Cardiac septum (tissue), 1 donor: ENCODE measurements at regions of chr1 and their contacts with region 1.

Region 1: DNA sequence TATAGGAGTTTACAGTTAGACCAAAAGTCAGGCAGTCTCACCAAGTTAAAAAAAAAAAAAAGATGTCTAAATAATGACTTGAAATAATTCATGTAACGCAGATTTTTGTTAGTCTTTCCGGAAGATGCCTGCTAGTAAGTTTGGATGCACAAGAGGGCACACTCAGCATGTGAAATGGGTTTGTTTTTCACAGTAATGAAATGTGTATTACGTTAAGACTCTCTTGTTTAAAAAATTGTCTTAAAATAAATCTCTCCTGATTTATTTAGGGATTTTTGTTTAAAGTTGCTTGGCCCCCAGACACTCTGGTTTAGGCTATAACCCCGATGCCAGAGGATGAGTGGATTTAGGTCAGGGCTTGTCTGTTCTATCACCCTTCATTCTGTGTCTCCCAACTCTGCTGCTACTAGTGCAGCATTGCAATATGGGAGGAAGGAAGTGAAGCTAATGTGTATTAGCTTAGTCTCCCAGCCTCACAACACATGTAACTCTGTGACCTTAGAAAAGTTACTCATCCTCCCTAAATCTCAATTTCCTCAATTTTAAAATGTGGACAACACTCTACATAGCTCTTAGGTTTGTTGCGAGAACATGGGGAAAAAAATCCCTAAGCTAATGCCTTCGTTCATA is 25.7 kb downstream of the CTH start:
- DNase-seq: no peak

Region 2: GRCh38 chr1:70410604-70411359 is 26.0 kb before region 1 on chr1 and contains the start of gene CTH:
- intact Hi-C with region 1: no loop called
- DNase-seq: peak; percentile 98
- total RNA-seq, gene CTH: 0.43 TPM

Region 3: DNA sequence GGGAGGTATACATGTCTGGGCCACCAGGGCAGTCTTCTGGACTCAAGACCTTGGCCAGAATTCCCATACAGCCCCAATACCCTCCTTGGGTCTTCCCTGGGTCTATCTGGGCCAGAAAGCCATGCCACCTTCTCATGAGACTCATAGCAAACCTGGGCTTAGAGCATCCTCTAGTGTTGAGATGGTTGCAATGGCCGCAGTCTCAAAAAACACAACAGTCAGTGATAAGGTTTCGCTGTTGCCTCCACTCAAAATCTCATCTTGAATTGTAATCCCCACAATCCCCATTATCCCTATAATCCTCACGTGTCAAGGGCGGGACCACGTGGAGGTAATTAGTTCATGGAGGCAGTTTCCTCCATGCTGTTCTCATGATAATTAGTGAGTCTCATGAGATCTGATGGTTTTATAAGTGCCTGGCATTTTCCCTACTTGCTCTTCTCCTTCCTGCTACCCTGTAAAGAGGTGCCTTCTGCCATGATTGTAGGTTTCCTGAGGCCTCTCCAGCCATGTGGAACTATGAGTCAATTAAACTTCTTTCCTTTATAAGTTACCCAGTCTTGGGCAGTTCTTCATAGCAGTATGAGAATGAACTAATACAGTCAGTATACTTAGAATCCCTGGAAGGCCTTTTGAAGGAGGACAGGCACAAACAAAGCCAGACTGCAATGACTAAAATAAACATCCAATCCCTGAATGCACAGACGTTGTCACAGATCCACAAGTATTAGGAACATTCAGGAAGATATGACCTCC is 51.4 kb after region 1 on chr1:
- intact Hi-C with region 1: loop called (anchors 10 kb)
- DNase-seq: no peak

Region 4: DNA sequence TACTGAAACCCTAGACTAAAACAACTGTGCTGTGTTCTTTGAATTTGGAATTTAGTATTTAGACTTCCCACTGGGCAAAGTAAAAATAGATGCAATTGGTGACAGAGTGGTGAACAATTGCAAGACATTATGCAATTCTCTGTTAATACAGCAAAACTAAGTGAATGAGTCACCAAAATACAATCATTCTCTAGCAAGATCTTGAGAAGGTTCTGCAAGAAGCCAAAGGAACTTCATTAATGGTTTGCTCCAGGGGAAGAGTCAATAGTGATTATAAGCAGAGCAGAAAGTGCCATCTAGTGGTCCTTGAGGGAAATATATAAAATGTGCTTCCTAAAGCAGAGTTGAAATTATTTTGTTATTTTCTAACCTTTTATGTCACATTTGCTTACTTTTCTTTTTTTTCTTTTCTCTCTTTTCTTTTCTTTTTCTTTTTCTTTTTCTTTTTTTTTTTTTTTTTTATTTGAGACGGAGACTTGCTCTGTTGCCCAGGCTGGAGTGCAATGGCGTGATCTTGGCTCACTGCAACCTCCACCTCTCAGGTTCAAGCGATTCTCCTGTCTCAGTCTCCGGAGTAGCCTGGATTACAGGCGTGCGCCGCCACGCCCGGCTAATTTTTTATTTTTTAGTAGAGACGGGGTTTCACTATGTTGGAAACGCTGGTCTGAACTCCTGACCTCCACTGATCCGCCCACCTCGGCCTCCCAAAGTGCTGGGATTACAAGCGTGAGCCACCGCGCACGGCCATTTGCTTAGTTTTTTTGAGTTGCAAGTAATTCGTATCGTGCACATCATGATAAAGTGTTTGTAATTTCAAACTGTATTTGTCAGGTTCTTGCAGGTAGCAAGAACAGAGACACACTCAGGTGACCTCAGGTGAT is 73.5 kb after region 1 on chr1:
- intact Hi-C with region 1: loop called (anchors 5 kb)
- DNase-seq: no peak

Region 5: GRCh38 chr1:71587961-71588360 is 1151.2 kb after region 1 on chr1:
- intact Hi-C with region 1: no loop called
- DNase-seq: no peak